ENCODE measurements at regions of chr14 and their contacts with region 1.

Region 1: DNA sequence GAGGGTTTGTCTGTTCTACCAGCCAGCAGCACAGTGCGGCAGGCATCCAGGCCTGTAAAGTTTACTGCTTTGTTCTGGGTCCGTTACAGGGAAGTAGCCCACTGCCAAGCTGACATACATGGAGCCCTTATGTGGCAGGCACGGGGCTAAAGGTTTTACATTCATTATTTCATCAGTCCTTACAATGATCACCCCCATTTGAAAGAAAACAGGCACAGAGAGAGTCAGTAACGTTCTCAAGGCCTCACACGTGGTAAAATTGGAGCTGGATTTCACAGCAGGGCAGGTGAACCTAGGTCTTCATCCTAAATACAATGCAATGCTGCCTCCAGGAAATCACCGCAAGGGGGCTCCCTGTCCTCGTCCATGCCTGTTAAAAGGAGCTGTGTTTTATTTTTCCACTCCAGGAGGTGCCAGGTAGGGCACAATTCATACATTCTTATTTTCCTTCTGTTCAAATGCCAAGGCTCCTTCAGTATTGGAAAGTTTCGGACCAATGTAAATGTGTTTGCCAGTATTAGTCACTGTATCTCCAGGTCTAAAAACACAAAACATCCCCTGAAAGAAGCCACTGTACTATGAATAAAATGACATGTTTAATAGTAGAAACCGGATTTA is 172.2 kb upstream of the GZMB start:
- DNase-seq: peak; percentile 16
- ATAC-seq: peak; percentile 89
- H3K4me3 ChIP-seq: no peak overlapping the region
- H3K27ac ChIP-seq: no peak overlapping the region
- H3K4me1 ChIP-seq: no peaks in the 10 kb centered on the region
- H3K27me3 ChIP-seq: no peaks in the 10 kb centered on the region
- CTCF ChIP-seq: peak; percentile 79 to 92 (median 82)
- EP300 ChIP-seq: no peak
- POLR2A ChIP-seq: no peak
- RAD21 ChIP-seq: peak; percentile 75

Region 2: DNA sequence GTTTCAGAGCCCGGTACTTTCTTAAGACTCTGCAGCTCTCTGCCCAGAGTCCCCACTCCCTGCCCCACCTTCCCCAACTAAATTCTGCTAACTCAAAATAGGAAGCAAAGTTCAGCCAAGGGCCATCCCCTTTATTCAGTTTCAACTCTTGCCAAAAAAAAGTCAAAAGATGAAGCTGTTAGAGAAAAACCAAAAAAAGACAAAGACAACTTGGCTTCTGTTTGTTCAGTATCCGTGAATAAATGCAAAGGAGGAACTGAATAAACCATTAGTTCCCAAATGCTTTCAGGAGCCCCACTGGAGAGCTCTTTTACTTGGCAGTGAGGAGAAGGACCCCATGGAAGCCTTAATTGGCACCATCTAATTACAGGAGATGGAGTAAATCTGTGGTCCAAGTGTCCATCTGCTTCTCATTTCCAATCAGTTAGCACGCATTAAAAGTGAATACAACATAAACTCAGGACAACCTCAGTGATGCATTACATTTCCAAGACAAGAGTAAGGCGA is 16.7 kb before region 1 on chr14:
- CTCF ChIA-PET with region 1: interaction called, 7 read pairs
- POLR2A ChIA-PET with region 1: no interaction called
- RAD21 ChIA-PET with region 1: interaction called, 7 read pairs
- SMC1A ChIA-PET with region 1: interaction called, 28 read pairs
- in situ Hi-C with region 1: no loop called
- intact Hi-C with region 1: no loop called
- DNase-seq: no peak
- ATAC-seq: no peak
- H3K4me3 ChIP-seq: no peak overlapping the region
- H3K27ac ChIP-seq: no peak overlapping the region
- H3K4me1 ChIP-seq: no peaks in the 10 kb centered on the region
- H3K27me3 ChIP-seq: no peaks in the 10 kb centered on the region
- CTCF ChIP-seq: no peak
- EP300 ChIP-seq: no peak
- POLR2A ChIP-seq: no peak
- RAD21 ChIP-seq: no peak

Region 3: DNA sequence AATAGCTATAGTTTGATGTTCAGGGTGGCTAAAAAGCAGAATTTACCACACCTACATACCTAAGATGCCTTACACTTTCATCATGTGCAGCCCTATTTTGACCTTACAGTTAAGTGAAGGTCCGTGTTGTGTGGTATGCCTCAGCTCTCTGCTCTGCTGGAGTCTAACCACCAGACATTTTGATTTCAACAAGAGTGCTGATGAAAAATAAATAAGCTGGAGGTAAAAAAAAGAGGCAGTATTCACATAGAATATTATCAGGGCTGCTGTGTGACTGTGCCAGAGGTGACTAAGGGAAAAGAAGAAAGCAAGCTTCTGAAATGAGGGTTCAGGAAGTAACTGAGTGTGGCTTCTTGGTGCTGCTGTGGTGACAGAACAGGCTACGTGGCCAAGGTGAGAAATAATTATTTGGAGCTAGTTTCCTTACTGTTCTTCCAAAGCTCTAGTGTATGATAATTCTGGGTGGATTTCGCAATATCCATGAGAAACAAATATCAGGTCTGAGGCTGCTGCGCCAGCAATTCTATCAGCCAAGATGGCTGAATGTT is 55.0 kb after region 1 on chr14:
- CTCF ChIA-PET with region 1: interaction called, 3 read pairs
- POLR2A ChIA-PET with region 1: no interaction called
- RAD21 ChIA-PET with region 1: interaction called, 10 read pairs
- SMC1A ChIA-PET with region 1: interaction called, 12 read pairs
- in situ Hi-C with region 1: no loop called
- intact Hi-C with region 1: no loop called
- DNase-seq: no peak
- ATAC-seq: peak; percentile 77
- H3K4me3 ChIP-seq: no peak overlapping the region
- H3K27ac ChIP-seq: no peak overlapping the region
- H3K4me1 ChIP-seq: no peaks in the 10 kb centered on the region
- H3K27me3 ChIP-seq: no peaks in the 10 kb centered on the region
- CTCF ChIP-seq: no peak
- EP300 ChIP-seq: no peak
- POLR2A ChIP-seq: no peak
- RAD21 ChIP-seq: no peak

Region 4: GRCh38 chr14:24965934-24966578 is 159.9 kb after region 1 on chr14:
- CTCF ChIA-PET with region 1: interaction called, 9 read pairs
- POLR2A ChIA-PET with region 1: no interaction called
- RAD21 ChIA-PET with region 1: interaction called, 4 read pairs
- SMC1A ChIA-PET with region 1: interaction called, 13 read pairs
- in situ Hi-C with region 1: no loop called
- intact Hi-C with region 1: no loop called
- DNase-seq: no peak
- ATAC-seq: peak; percentile 69
- H3K4me3 ChIP-seq: no peak overlapping the region
- H3K27ac ChIP-seq: no peak overlapping the region
- H3K4me1 ChIP-seq: no peaks in the 10 kb centered on the region
- H3K27me3 ChIP-seq: no peaks in the 10 kb centered on the region
- CTCF ChIP-seq: no peak
- EP300 ChIP-seq: 0 out of 4 replicates have a peak, but pooled peaks of 1 of the 2 experiments have one; percentile 9
- POLR2A ChIP-seq: no peak
- RAD21 ChIP-seq: no peak

Region 5: DNA sequence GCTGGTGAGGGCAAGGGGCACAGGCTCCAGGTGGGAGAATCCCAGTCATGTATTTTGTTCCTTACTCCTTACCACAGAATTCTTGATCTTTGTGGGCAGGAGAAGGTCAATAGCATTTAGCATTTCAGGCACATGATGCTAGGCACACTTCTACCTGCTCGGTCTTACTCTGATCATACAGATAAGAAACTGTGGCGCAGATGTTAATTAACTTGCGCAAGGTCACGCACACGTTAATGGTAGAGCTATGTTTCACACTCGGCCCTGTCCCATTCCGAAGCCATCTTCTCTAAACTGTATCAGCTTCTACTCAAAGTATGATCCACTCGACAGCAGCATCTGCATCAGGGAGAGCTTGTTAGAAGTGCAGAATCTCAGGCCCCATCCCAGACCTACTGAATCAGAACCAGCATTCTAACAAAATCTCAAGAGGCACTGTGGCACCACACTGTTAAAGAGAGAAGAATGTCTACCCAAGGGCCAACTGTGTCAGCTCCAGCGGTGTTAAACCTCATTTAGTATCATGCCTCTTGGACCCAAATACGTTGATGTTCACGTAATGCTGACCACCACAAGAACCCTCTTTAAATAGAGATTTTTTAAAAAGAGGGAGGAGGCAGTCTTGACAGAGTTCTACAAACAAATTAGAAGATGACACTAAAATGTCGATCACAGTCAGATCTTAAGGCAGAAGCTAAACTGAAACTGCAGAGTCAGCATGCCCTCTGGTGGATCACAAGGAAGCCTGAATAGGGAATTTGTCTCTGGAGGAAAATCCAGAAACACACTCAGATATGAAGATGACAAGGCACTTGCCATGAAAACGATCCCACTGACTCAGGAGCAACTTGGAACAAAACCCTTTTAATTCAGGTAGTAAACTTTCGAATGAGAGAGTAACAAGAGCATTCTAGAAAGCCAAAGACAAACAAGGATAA is 236.5 kb after region 1 on chr14:
- CTCF ChIA-PET with region 1: interaction called, 52 read pairs
- POLR2A ChIA-PET with region 1: no interaction called
- RAD21 ChIA-PET with region 1: interaction called, 27 read pairs
- SMC1A ChIA-PET with region 1: interaction called, 54 read pairs
- in situ Hi-C with region 1: no loop called
- intact Hi-C with region 1: no loop called
- DNase-seq: no peak
- ATAC-seq: no peak
- H3K4me3 ChIP-seq: no peak overlapping the region
- H3K27ac ChIP-seq: no peak overlapping the region
- H3K4me1 ChIP-seq: no peaks in the 10 kb centered on the region
- H3K27me3 ChIP-seq: no peaks in the 10 kb centered on the region
- CTCF ChIP-seq: 0 out of 6 replicates have a peak, but pooled peaks of 1 of the 3 experiments have one; percentile 8
- EP300 ChIP-seq: no peak
- POLR2A ChIP-seq: no peak
- RAD21 ChIP-seq: no peak

Region 6: GRCh38 chr14:25121337-25122122 is 315.4 kb after region 1 on chr14:
- CTCF ChIA-PET with region 1: interaction called, 19 read pairs
- POLR2A ChIA-PET with region 1: no interaction called
- RAD21 ChIA-PET with region 1: no interaction called
- SMC1A ChIA-PET with region 1: no interaction called
- in situ Hi-C with region 1: no loop called
- intact Hi-C with region 1: no loop called
- DNase-seq: no peak
- ATAC-seq: peak; percentile 9
- H3K4me3 ChIP-seq: no peak overlapping the region
- H3K27ac ChIP-seq: no peak overlapping the region
- H3K4me1 ChIP-seq: no peaks in the 10 kb centered on the region
- H3K27me3 ChIP-seq: no peaks in the 10 kb centered on the region
- CTCF ChIP-seq: no peak
- EP300 ChIP-seq: no peak
- POLR2A ChIP-seq: no peak
- RAD21 ChIP-seq: no peak

Region 7: DNA sequence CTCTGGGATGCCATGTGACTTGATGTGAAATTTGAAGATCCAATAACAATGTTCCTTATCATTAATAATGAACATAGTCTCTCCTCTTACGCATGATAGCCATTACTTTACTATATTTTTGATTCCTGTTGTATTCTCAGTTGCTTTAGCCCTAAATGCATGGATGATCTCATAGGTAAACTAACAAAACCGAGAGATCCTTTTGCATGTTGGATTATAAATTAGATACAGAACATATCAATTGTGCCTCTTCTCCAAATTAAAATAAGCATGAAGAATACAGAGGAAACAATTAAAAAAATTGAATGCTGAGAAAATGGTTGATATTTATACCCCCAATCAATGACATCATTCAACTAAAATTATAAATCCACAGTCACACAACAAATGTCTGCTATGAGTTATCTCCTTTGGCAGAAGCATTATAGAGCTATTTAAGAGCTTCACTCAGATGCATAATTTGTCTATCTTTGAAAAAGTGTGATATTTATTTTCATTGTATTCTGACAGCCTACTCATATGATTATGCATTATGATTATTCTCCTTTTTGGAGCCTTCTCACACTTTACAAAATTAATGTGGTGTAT is 630.2 kb after region 1 on chr14:
- CTCF ChIA-PET with region 1: no interaction called
- POLR2A ChIA-PET with region 1: no interaction called
- RAD21 ChIA-PET with region 1: no interaction called
- SMC1A ChIA-PET with region 1: no interaction called
- in situ Hi-C with region 1: no loop called
- intact Hi-C with region 1: no loop called
- DNase-seq: no peak
- ATAC-seq: no peak
- H3K4me3 ChIP-seq: no peak overlapping the region
- H3K27ac ChIP-seq: no peak overlapping the region
- H3K4me1 ChIP-seq: no peaks in the 10 kb centered on the region
- H3K27me3 ChIP-seq: no peaks in the 10 kb centered on the region
- CTCF ChIP-seq: no peak
- EP300 ChIP-seq: no peak
- POLR2A ChIP-seq: no peak
- RAD21 ChIP-seq: no peak

Region 8: DNA sequence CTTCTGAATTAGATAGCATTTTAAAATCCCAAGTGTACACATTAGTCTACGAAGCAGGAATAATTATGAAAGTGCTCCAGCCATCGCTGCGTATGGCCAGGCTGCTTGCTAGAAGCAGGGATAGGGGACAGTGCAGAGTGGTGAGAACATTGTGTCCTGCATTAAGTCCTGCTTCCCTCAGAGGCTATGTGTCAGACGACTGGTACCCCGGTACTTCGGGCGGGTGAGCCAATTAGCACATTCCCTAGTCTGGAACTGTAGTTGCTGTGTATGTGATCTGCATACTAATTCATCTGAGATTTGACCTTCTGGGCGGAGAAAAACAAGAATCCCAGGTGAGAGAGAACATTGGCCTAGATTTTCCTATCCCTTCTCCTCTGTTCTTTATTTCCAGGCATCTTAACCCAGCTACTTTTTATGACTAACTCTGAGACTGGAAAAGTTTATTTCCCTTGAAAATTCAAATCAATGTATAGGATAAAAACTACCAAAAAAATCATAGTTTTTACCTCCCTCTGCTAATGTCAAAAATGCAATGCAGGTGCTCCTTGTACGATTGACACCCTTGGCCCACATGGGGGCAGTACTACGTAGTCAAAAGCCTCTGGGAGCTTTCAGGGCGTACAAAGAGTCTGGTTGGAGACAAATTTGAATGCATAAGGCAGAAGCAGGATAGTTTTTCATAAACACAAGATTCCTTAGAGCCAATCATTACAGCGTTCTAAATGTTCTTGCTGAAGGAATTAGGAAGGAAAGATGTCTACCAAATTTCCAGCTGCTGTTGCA is 1027.4 kb after region 1 on chr14:
- CTCF ChIA-PET with region 1: no interaction called
- POLR2A ChIA-PET with region 1: no interaction called
- RAD21 ChIA-PET with region 1: no interaction called
- SMC1A ChIA-PET with region 1: no interaction called
- in situ Hi-C with region 1: no loop called
- intact Hi-C with region 1: no loop called
- DNase-seq: no peak
- ATAC-seq: no peak
- H3K4me3 ChIP-seq: no peak overlapping the region
- H3K27ac ChIP-seq: no peak overlapping the region
- H3K4me1 ChIP-seq: no peaks in the 10 kb centered on the region
- H3K27me3 ChIP-seq: no peaks in the 10 kb centered on the region
- CTCF ChIP-seq: peak in 2 of 3 experiments; percentile 1 to 12; a peak in 1 of 6 replicates
- EP300 ChIP-seq: no peak
- POLR2A ChIP-seq: no peak
- RAD21 ChIP-seq: no peak